Posterior vena cava (tissue), 2 donors: ENCODE measurements at regions of chr17 and their contacts with region 1.

Region 1: DNA sequence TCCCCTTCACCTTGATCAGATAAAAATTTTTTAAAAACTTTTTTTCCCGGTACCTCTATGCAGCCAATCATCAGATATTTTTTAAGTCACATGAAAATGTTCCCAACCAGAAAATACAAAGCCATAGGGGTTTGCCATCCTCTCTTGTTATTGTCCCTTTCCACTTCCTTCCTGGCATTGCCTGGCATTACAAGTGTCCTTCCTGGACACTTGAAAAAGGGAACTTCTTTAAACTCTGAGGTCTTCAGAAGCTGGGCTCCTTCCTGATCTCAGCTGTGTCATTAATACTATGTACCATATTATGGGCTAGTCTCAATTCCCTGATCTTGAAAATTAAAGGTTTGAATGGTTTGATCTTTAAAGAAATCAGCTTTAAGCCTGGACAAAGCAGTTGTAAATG is 64.9 kb downstream of the TEX14 start:
- DNase-seq: no peak

Region 2: GRCh38 chr17:57584050-57584551 is 1042.8 kb before region 1 on chr17:
- intact Hi-C with region 1: no loop called
- DNase-seq: no peak

Region 3: DNA sequence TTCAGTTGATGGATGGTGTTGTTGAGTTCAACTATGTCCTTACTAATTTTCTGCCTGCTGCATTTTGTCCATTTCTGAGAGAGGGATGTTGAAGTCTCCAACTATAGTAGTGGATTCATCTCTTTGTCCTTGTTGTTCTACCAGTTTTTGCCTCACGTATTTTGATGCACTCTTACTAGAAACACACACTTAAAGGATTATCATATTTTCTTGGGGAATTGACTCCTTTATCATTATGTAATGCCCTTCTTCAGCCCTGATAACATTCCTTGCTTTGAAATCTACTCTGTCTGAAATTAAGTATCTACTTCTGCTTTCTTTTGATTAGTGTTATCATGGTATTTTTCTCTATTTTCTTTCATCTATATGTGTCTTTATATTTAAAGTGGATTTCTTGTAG is 280.6 kb after region 1 on chr17:
- intact Hi-C with region 1: loop called in 1 of 2 experiments (anchors 5 kb)
- DNase-seq: no peak

Region 4: GRCh38 chr17:59415397-59415796 is 788.5 kb after region 1 on chr17:
- intact Hi-C with region 1: no loop called
- DNase-seq: no peak